A549 (cell line): ENCODE measurements at regions of chr3 and their contacts with region 1.

Region 1: GRCh38 chr3:102673271-102674115 is 238.7 kb downstream of the ZPLD1 start:
- DNase-seq: peak; percentile 40 to 53
- ATAC-seq: peak; percentile 88 to 92
- H3K4me3 ChIP-seq: no peak overlapping the region
- H3K27ac ChIP-seq: no peak overlapping the region
- H3K4me1 ChIP-seq: no peaks in the 10 kb centered on the region
- CTCF ChIP-seq: peak; percentile 92
- EP300 ChIP-seq: no peak
- POLR2A ChIP-seq: no peak
- RAD21 ChIP-seq: peak; percentile 91 to 93

Region 2: GRCh38 chr3:101809178-101810021 is 864.1 kb before region 1 on chr3:
- CTCF ChIA-PET with region 1: no interaction called
- POLR2A ChIA-PET with region 1: no interaction called
- DNase-seq: peak in 1 of 2 experiments; percentile 57
- ATAC-seq: peak; percentile 39 to 74; a peak in 3 of 6 replicates
- H3K4me3 ChIP-seq: no peak overlapping the region
- H3K27ac ChIP-seq: peak overlapping the region in 1 of 2 experiments; percentile 6; a peak in 1 of 6 replicates
- H3K4me1 ChIP-seq: peaks cover 23% of the 10 kb centered on the region
- CTCF ChIP-seq: peak; percentile 79
- EP300 ChIP-seq: no peak
- POLR2A ChIP-seq: no peak
- RAD21 ChIP-seq: peak; percentile 76 to 84

Region 3: GRCh38 chr3:102434715-102435114 is 238.8 kb before region 1 on chr3 and contains the start of gene ZPLD1:
- CTCF ChIA-PET with region 1: no interaction called
- POLR2A ChIA-PET with region 1: no interaction called
- DNase-seq: no peak
- ATAC-seq: no peak
- H3K4me3 ChIP-seq: no peak within 1 kb of the TSS
- H3K27ac ChIP-seq: no peak within 1 kb of the TSS
- H3K4me1 ChIP-seq: no peaks in the 10 kb centered on the region
- CTCF ChIP-seq: no peak
- EP300 ChIP-seq: no peak
- POLR2A ChIP-seq: no peak
- RAD21 ChIP-seq: no peak
- polyA plus RNA-seq, gene ZPLD1: 0.03 and 0.04 TPM in 2 replicates

Region 4: DNA sequence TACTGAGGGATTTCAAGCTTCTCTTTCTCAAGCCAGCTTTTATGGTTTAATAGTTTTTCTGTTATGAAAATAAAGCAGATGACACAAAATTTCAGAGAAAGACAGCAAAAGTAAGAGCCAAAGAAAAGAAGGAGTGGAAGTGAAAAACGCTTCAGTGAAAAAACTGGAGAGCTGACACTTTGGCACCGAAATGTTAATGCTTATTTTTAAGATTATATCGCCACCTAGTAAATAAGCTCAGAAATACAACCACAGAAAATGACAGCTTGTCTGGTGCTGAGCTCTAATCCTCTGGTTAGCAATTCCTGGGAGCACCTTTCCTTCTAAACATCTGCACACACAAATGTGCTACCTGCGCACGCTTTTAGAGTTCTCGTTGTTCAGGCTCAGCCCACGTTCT is 137.0 kb before region 1 on chr3:
- CTCF ChIA-PET with region 1: no interaction called
- POLR2A ChIA-PET with region 1: no interaction called
- DNase-seq: peak; percentile 15 to 40
- ATAC-seq: peak; percentile 74 to 79
- H3K4me3 ChIP-seq: no peak overlapping the region
- H3K27ac ChIP-seq: no peak overlapping the region
- H3K4me1 ChIP-seq: no peaks in the 10 kb centered on the region
- CTCF ChIP-seq: peak; percentile 73
- EP300 ChIP-seq: no peak
- POLR2A ChIP-seq: no peak
- RAD21 ChIP-seq: peak; percentile 66 to 84

Region 5: DNA sequence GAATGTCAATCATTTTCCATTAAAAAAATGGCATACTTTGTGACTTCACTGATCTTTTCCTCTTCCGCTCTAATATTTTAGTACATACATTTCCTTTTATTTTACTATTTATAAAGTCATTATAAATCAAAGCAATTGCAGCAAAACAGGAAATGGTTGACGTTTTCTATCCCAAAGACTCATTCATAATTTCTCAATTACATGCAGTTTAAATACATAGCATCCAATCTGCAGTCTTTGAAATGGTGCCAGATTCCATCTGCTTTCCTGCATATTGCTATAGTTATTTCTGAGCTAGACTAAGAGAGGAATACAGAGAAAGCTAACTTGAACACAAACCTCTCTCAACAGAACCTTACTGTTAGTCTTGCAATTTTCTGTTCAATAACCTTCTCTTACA is 58.9 kb before region 1 on chr3:
- CTCF ChIA-PET with region 1: no interaction called
- POLR2A ChIA-PET with region 1: no interaction called
- DNase-seq: no peak
- ATAC-seq: no peak
- H3K4me3 ChIP-seq: no peak overlapping the region
- H3K27ac ChIP-seq: no peak overlapping the region
- H3K4me1 ChIP-seq: no peaks in the 10 kb centered on the region
- CTCF ChIP-seq: no peak
- EP300 ChIP-seq: no peak
- POLR2A ChIP-seq: no peak
- RAD21 ChIP-seq: no peak

Region 6: GRCh38 chr3:102661707-102662497 is 11.6 kb before region 1 on chr3:
- CTCF ChIA-PET with region 1: interaction called, 32 read pairs
- POLR2A ChIA-PET with region 1: no interaction called
- DNase-seq: no peak
- ATAC-seq: no peak
- H3K4me3 ChIP-seq: no peak overlapping the region
- H3K27ac ChIP-seq: no peak overlapping the region
- H3K4me1 ChIP-seq: no peaks in the 10 kb centered on the region
- CTCF ChIP-seq: no peak
- EP300 ChIP-seq: no peak
- POLR2A ChIP-seq: no peak
- RAD21 ChIP-seq: no peak

Region 7: DNA sequence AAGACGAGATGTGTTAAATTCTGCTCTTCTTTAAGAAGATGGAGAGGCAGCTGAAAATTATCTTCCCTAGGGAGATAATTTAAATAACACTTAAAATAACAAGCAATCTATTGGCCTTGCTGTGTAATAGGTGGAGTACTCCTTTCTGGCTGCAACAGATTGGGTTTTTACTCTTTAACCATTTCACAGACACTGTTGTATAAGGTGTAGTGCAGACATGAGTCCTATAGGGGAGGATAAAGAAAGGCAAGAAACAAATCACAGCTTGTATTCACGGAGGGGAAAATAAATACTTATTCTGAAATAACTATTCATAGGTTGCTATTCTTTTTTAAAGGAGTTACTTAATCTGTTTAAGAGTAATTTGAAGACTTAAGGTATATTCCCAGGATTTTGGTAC is 13.3 kb after region 1 on chr3:
- CTCF ChIA-PET with region 1: interaction called, 18 read pairs
- POLR2A ChIA-PET with region 1: no interaction called
- DNase-seq: no peak
- ATAC-seq: no peak
- H3K4me3 ChIP-seq: no peak overlapping the region
- H3K27ac ChIP-seq: no peak overlapping the region
- H3K4me1 ChIP-seq: no peaks in the 10 kb centered on the region
- CTCF ChIP-seq: no peak
- EP300 ChIP-seq: no peak
- POLR2A ChIP-seq: no peak
- RAD21 ChIP-seq: no peak